Mucosa of descending colon (tissue), 3 donors: ENCODE measurements at regions of chr3 and their contacts with region 1.

Region 1: GRCh38 chr3:31225923-31226322 is 306.8 kb upstream of the STT3B start:
- DNase-seq: no peak
- ATAC-seq: no peak
- H3K4me3 ChIP-seq: no peak overlapping the region
- H3K4me1 ChIP-seq: peaks cover 2% of the 10 kb centered on the region
- CTCF ChIP-seq: no peak

Region 2: GRCh38 chr3:31275038-31275562 is 49.2 kb after region 1 on chr3:
- intact Hi-C with region 1: loop called in 1 of 2 experiments (anchors 1 kb)
- DNase-seq: no peak
- ATAC-seq: no peak
- H3K4me3 ChIP-seq: no peak overlapping the region
- H3K4me1 ChIP-seq: no peaks in the 10 kb centered on the region
- CTCF ChIP-seq: no peak